ENCODE measurements at regions of chr7 and their contacts with region 1.

Region 1: GRCh38 chr7:38222481-38223096 is 44.5 kb downstream of the STARD3NL start:
- DNase-seq: peak; percentile 32
- H3K4me3 ChIP-seq: no peak overlapping the region
- H3K27ac ChIP-seq: no peak overlapping the region
- H3K27me3 ChIP-seq: no peaks in the 10 kb centered on the region
- CTCF ChIP-seq: peak; percentile 88

Region 2: GRCh38 chr7:38107486-38107893 is 115.1 kb before region 1 on chr7:
- CTCF ChIA-PET with region 1: interaction called, 73 read pairs
- POLR2A ChIA-PET with region 1: no interaction called
- DNase-seq: peak; percentile 4
- H3K4me3 ChIP-seq: no peak overlapping the region
- H3K27ac ChIP-seq: no peak overlapping the region
- H3K27me3 ChIP-seq: no peaks in the 10 kb centered on the region
- CTCF ChIP-seq: peak; percentile 83

Region 3: DNA sequence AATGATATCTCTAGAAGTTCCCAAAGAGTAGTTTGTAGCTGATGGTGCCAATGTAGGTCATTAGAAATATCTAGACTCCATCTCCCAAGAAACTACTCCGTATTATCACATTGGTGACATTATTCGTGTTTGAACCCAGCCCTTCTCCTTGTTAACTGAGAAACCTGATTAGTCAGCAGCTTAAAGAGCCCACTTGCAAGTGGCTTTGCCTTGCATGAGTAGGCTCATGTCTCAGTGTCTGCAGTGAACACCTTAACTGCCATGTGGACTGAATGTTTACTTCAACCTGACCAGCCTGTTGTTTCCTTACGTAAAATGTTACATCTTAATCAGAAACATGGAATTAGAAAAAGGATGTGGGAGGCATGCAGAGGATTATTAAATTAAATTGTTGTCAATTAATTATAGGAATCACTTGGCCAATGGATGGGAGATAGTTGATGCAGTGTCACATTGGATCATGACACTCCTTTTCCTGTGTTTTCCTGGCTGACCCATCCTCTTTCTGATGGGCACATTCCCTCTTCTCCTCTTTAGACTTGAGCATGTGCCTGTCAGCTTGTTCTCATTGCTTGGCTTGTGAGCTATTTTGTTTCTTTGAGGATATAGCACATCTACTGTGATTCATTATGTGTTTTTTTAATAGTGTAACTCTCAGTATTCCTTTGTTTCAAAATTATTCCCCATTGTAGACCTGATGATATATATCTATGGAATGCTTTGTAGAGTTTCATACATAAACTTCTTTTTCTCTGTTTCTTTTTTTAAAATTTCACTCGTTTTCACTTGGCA is 26.6 kb before region 1 on chr7:
- CTCF ChIA-PET with region 1: interaction called, 29 read pairs
- POLR2A ChIA-PET with region 1: no interaction called
- DNase-seq: no peak
- H3K4me3 ChIP-seq: no peak overlapping the region
- H3K27ac ChIP-seq: no peak overlapping the region
- H3K27me3 ChIP-seq: no peaks in the 10 kb centered on the region
- CTCF ChIP-seq: no peak

Region 4: DNA sequence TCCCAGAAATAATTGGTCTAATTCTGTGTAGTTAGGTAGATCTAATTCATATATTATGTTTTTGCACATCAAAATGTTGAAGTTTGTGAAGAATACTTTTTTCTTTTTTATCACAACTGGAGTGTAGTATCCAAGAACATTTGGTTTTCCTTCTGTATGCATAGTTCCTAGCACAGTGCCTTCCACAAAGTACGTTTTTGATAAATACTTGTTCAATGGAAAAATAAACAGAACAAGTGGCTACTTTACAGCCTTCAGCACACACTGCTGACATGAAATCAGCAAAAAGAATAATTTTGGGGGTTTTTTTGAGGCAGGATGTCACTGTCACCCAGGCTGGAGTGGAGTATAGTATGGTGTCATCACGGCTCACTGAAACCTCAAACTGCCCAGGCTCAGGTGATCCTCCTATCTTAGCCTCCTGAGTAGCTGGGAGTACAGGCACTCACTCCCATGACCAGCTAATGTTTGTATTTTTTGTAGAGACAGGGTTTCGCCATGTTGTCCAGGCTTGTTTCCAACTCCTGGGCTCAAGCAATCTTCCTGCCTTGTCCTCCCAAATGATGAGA is 22.9 kb after region 1 on chr7:
- CTCF ChIA-PET with region 1: no interaction called
- POLR2A ChIA-PET with region 1: no interaction called
- DNase-seq: no peak
- H3K4me3 ChIP-seq: no peak overlapping the region
- H3K27ac ChIP-seq: no peak overlapping the region
- H3K27me3 ChIP-seq: no peaks in the 10 kb centered on the region
- CTCF ChIP-seq: no peak

Region 5: DNA sequence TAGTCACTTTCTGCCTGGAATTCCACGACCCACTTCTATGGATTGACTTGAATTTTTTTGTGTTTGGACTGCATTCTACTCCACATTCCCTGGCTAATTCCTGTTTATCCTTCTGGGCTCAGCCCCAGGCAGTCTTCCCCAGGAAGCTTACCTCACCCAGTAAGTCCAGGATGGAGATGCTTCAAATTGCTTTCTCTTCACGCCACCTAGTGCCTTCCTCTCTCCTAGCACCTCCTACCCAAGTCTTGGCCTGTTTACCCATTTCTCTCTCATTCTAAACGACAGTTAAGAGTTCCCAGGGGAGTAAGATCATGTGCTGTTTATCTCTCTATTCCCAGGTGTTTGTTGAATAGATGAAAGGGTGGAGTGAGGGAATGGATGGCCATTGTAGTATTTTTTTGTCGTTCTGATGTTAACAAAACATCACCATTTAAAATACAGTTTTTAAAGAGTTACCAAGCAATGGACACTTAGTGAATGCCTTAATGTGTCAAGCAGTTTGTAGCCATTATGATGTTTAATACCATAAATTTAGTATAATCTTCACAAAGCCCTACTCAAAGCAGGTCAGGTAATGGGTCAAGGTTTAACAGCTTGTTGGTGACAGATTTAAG is 96.3 kb after region 1 on chr7:
- CTCF ChIA-PET with region 1: interaction called, 19 read pairs
- POLR2A ChIA-PET with region 1: no interaction called
- DNase-seq: peak; percentile 51
- H3K4me3 ChIP-seq: no peak overlapping the region
- H3K27ac ChIP-seq: no peak overlapping the region
- H3K27me3 ChIP-seq: no peaks in the 10 kb centered on the region
- CTCF ChIP-seq: peak; percentile 82

Region 6: DNA sequence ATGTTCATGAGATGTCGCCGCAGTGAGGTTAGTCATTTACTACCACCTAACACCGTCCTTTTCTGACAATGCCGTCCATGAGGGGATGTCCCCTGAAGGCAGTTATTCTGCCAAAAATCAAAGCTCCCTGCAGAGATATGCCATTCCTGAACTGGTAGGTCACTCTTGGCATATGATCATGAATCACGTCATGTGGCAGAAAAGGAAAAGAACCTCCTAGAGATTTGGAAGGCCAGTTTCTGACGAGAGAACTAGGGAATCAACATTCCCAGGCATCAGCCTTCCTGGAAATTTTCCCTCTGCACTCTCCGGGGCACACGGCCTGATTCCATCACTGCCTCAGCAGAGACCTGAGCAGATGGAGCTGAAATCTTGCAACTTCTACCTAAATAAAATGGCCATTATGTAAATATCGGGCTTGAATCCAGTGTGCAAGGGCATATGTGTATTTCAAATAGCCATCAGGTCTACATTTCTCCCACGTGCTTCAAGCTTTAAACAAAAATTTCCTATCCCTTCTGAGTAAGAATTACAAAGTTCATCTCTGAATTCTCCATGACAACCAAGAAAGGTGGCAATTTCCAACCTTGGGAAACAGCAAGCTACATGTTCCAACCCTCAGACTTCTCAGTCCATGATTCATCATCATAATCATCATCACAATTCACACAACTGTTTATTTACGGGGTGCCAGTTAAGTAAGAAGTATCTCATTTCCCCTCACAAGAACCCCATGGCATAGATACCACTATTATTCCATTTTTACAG is 362.0 kb after region 1 on chr7:
- CTCF ChIA-PET with region 1: no interaction called
- POLR2A ChIA-PET with region 1: no interaction called
- DNase-seq: peak; percentile 7
- H3K4me3 ChIP-seq: no peak overlapping the region
- H3K27ac ChIP-seq: no peak overlapping the region
- H3K27me3 ChIP-seq: no peaks in the 10 kb centered on the region
- CTCF ChIP-seq: no peak